BJ (cell line): ENCODE measurements at regions of chr1 and their contacts with region 1.

Region 1: DNA sequence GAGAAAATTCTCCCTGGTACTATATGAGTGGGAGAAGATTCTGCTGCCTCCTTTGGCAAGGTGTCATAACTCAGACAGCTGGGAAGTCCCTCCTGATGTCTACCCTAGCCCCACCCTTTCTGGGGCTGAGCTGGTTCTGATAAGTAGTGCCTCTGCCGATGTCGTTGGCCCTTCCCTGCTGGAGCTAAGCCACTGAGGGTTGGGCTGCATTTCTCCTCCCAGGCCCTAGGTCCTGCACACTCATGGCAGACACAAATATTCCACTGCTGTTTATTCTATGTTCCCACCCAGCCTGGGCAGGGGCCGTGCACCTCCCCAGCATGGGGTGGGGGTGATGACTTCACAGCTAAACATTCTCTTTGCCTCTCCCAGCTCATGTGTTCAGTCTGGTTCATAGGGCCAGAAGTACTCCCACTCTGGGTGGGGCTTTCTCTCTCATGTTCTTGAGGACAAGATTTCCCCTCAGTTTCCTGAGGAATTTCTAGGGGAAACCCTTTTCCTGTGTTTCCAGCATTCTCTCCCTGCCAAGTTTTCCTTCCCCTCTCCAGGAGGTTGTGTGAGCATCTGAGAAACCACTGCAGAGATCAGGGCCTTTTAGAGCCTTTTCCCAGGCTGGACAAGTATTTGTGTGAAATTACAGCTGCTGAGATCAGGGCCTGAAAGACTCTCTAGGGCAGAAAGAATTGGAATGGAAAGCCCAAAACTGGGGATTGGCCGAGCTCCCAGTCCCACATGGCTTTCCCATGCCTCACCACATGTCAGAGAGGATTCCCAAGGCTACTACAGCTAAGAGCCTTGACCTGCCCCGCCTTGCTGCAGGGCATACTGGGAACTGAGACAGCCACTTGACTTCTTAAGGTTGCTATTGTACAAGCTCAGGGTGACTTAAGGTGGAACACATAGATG is 66.2 kb downstream of the ATP2B4 start:
- DNase-seq: peak; percentile 97
- H3K4me3 ChIP-seq: no peak overlapping the region
- H3K27me3 ChIP-seq: no peaks in the 10 kb centered on the region
- CTCF ChIP-seq: no peak

Region 2: DNA sequence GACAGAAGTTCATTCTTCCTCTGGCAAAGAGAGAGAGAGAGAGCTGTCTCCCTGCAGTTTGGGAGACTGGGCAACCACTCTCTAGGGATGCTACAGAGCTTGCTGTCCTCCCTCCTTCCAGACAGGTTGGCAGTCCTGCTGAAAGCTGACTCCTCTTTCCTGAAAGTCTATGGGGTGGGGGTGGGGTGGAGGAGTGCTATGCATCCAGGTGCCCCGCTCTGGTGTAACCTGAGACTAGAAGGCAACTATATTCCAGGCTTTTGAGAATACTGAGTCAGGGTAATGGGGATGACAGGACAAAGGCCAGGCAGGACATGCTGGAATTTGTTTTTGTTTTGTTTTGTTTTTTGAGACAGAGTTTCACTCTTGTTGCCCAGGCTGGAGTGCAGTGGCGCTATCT is 143.5 kb before region 1 on chr1:
- CTCF ChIA-PET with region 1: no interaction called
- POLR2A ChIA-PET with region 1: interaction called, 21 read pairs
- DNase-seq: no peak
- H3K4me3 ChIP-seq: no peak overlapping the region
- H3K27me3 ChIP-seq: no peaks in the 10 kb centered on the region
- CTCF ChIP-seq: no peak

Region 3: GRCh38 chr1:203682473-203683383 is 10.1 kb before region 1 on chr1:
- CTCF ChIA-PET with region 1: interaction called, 11 read pairs
- POLR2A ChIA-PET with region 1: no interaction called
- DNase-seq: no peak
- H3K4me3 ChIP-seq: no peak overlapping the region
- H3K27me3 ChIP-seq: no peaks in the 10 kb centered on the region
- CTCF ChIP-seq: no peak